ENCODE measurements at regions of chr3 and their contacts with region 1.

Region 1: DNA sequence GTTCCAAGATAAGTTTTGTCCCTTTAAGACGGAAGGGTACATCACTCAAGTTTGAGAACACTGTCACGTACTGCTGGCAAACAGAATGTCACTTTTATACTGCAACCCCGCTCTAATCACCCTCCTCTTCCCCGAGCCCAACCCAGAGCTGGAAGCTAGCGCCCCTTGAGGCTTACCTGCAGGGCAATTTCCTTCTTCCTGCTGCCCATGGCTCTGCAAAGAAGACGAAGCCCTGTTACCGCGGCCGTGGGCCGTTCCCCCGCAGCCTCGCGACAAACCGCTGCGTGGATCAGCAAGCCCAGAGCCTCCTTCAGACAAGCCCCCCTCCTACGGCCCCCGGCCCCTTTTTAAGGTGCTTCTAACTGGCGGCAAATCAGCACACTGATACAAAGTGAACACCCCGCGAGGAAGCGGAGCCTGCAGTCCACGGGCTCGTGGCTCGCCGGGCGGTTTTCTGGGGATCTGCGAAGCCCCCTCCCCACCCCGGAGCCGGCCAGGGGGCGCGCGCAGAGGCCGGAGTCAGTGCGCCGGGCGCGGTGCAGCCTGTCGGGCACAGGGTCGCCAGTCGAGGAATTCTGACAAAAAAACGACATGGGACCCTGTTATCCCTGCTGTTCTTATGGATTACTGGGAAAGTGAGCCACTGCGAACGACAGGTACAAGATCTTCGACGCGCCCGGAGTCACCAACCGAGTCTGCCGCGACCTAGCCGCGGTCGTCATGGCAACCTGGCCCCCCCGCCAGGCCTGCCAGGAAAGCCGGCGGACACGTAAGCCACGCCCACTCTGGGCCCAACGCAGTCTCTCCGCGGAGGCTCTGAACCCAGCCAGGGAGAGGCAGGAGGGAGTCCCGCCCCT is at the start of gene NME9:
- DNase-seq: peak; percentile 93
- H3K4me3 Mint-ChIP-seq: peak within 1 kb of the TSS; percentile 89
- H3K27ac Mint-ChIP-seq: peak within 1 kb of the TSS; percentile 80
- H3K4me1 Mint-ChIP-seq: peaks cover 28% of the 10 kb centered on the region
- H3K27me3 Mint-ChIP-seq: no peaks in the 10 kb centered on the region
- total RNA-seq, gene NME9: 0.58 to 0.90 TPM

Region 2: GRCh38 chr3:138068579-138069174 is 260.7 kb before region 1 on chr3:
- CTCF ChIA-PET with region 1: no interaction called
- POLR2A ChIA-PET with region 1: no interaction called
- intact Hi-C with region 1: loop called (anchors 5 kb)
- DNase-seq: peak; percentile 86
- H3K4me3 Mint-ChIP-seq: no peak overlapping the region
- H3K27ac Mint-ChIP-seq: no peak overlapping the region
- H3K4me1 Mint-ChIP-seq: peaks cover 14% of the 10 kb centered on the region
- H3K27me3 Mint-ChIP-seq: peaks cover 25% of the 10 kb centered on the region

Region 3: DNA sequence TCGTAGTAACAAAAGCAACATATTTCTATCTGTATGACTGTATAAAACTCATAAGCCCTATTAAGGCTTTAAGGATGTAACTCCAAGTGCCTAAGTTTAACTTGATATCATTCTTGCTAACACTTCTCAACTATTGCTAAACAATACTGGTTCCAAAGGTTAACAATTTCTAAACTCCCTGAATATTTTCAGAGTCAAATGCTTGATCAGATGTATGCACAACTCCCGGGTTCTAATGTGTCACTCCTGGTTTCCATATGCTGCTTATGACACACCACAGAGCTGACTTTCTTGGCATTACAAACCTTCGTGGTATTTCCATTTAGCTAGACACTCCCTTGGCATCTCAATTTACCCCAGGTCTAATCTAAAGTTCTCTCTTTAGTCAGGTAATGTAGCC is 240.3 kb before region 1 on chr3:
- CTCF ChIA-PET with region 1: no interaction called
- POLR2A ChIA-PET with region 1: no interaction called
- intact Hi-C with region 1: no loop called
- DNase-seq: no peak
- H3K4me3 Mint-ChIP-seq: no peak overlapping the region
- H3K27ac Mint-ChIP-seq: no peak overlapping the region
- H3K4me1 Mint-ChIP-seq: no peaks in the 10 kb centered on the region
- H3K27me3 Mint-ChIP-seq: peaks cover 8% of the 10 kb centered on the region

Region 4: DNA sequence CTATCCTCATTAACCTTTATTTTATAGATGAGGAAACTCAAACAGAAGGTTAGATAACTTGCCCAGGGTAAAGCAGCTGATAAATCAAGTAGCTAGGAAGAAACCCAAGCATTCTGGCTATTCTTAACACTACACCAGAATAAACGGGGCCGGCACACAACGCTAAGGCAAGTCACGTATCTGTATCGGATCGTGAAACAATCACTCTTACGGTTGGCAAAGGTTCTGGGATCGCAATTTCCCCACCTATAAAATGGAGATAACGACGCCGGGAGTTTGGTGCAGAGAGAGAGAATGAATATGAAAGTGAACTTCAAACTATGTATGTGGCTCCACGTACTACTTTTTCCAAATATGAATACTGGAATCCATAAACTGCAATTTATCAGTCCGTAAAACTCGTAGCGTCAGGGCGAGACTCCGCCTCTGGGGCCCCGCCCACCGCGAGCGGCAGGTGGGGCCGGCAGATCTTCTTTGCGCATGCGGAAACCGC is 142.5 kb before region 1 on chr3:
- CTCF ChIA-PET with region 1: interaction called, 11 read pairs
- POLR2A ChIA-PET with region 1: no interaction called
- intact Hi-C with region 1: loop called (anchors 2 kb)
- DNase-seq: peak; percentile 94
- H3K4me3 Mint-ChIP-seq: peak overlapping the region; percentile 91
- H3K27ac Mint-ChIP-seq: peak overlapping the region; percentile 93
- H3K4me1 Mint-ChIP-seq: peaks cover 35% of the 10 kb centered on the region
- H3K27me3 Mint-ChIP-seq: peaks cover 7% of the 10 kb centered on the region

Region 5: DNA sequence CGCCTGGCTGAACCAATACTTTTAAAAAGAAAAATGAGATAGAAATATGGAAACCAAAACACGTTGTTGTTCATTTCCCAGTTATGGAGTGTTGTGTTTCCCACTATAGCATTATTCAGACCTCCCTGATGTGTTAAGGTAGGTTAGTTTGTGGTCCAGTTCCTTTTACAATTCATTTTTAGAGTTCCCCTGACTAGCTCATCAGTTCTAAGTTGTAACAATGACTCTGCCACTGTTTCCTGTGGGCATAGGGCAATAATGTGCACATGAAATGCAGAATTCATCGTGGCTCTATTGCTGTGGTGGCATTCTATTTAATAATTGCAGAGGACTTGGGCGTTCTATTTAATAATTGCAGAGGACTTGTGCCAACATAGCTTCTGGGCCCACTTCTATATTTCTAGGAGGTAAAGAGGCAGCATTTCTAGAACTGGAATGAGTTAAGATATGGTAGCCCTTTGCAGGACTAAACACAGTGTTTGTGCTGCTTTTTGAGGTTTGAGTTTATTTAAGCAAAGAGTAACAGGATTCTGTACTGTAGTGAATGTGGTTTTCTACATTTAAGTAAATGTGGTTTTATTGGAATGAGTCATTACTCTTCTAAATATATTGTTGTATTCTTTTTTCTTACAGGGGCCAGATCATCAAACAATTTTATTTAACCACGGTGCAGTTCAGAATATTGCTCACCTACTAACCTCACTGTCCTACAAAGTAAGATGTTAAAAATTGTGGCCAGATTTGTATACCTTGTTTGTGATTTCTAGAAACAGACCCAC is 94.8 kb before region 1 on chr3:
- CTCF ChIA-PET with region 1: no interaction called
- POLR2A ChIA-PET with region 1: no interaction called
- intact Hi-C with region 1: loop called (anchors 5 kb)
- DNase-seq: no peak
- H3K4me3 Mint-ChIP-seq: no peak overlapping the region
- H3K27ac Mint-ChIP-seq: peak overlapping the region; percentile 42
- H3K4me1 Mint-ChIP-seq: peaks cover 21% of the 10 kb centered on the region
- H3K27me3 Mint-ChIP-seq: no peaks in the 10 kb centered on the region

Region 6: GRCh38 chr3:138284957-138285477 is 44.3 kb before region 1 on chr3:
- CTCF ChIA-PET with region 1: interaction called, 3 read pairs
- POLR2A ChIA-PET with region 1: no interaction called
- intact Hi-C with region 1: loop called (anchors 2 kb)
- DNase-seq: no peak
- H3K4me3 Mint-ChIP-seq: no peak overlapping the region
- H3K27ac Mint-ChIP-seq: no peak overlapping the region
- H3K4me1 Mint-ChIP-seq: peaks cover 14% of the 10 kb centered on the region
- H3K27me3 Mint-ChIP-seq: no peaks in the 10 kb centered on the region

Region 7: GRCh38 chr3:138296639-138297038 is 32.7 kb before region 1 on chr3:
- CTCF ChIA-PET with region 1: interaction called, 6 read pairs
- POLR2A ChIA-PET with region 1: interaction called, 6 read pairs
- intact Hi-C with region 1: loop called (anchors 1 kb)
- DNase-seq: peak; percentile 67
- H3K4me3 Mint-ChIP-seq: peak overlapping the region; percentile 31
- H3K27ac Mint-ChIP-seq: peak overlapping the region; percentile 83
- H3K4me1 Mint-ChIP-seq: peaks cover 33% of the 10 kb centered on the region
- H3K27me3 Mint-ChIP-seq: no peaks in the 10 kb centered on the region

Region 8: DNA sequence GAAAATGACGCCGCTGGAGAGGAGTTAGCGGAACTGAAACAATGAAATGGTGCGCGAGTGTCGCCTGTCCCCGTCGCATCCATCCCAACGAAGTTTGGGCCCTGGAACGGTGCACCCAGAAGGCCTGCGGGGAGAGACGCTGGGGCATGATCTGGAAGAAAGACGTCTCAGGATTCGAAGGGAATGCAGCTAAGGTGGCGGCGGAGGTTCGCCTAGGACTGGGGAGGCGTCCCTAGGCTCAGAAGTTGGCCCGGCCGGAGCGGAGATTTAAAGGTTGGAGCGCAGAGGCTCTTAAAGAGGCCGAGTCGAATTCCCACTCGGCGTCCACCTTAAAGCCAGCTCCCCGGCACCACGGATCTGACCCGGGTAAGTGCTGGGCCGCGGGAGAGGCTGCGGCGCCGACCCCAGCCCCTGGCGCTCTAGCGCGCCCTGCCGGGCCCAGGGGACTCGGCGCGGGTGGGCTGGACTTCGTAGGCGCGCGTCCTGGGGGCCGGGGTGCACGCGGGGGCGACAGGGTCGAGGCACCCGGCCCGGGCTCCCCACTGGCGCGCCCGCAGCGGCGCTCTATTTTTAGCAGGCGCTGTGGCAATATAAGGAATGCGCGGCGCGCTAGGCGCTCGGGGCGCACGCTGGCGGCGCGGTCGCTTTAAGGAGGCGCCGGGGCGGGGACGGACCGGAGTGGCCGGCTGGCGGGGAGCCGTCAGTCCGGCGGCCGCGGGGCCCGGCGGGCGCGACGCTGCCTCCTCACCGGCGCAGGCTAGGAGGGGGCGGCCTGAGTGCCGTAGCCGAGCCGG is 18.8 kb after region 1 on chr3 and contains the start of gene MRAS:
- CTCF ChIA-PET with region 1: interaction called, 10 read pairs
- POLR2A ChIA-PET with region 1: no interaction called
- intact Hi-C with region 1: loop called (anchors 1 kb)
- DNase-seq: peak; percentile 46
- H3K4me3 Mint-ChIP-seq: peak within 1 kb of the TSS; percentile 86
- H3K27ac Mint-ChIP-seq: no peak within 1 kb of the TSS
- H3K4me1 Mint-ChIP-seq: peaks cover 7% of the 10 kb centered on the region
- H3K27me3 Mint-ChIP-seq: peaks cover 31% of the 10 kb centered on the region
- total RNA-seq, gene MRAS: 0.10 to 0.19 TPM